CD8-positive, alpha-beta memory T cell (primary cell): ENCODE measurements at regions of chr4 and their contacts with region 1.

Region 1: DNA sequence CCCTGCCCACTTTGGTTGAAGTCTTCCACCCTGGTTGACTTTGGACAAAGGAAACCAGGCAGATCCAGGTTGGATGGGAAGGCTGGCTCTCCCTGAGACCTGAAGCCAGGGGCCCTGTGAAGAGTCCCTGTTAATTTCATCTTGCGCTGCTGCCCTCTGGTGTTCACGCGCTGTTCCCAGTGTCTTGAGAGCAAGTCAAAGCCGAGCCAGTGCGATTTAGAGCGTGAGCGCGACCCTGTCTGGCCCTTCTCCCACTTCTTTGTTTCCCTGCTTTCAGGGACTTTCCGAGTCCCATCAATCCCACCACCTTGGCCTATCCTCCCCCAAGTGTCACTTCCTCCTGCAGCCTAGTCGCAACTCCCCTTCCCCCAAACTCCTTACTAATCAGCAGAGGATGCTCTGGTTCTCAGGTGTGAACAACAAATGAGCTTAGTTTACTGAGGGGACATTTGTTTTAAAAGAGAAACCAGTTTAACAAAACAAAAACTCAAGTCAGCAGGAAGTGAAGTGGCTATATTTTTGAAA is 25.8 kb upstream of the CHRNA9 start:
- DNase-seq: peak; percentile 84 to 93 (median 87)
- H3K4me3 ChIP-seq: peak overlapping the region; percentile 46
- H3K4me3 Mint-ChIP-seq: peak overlapping the region; percentile 71 to 88 (median 81)
- H3K27ac ChIP-seq: peak overlapping the region; percentile 62
- H3K27ac Mint-ChIP-seq: peak overlapping the region; percentile 94 to 99 (median 98)
- H3K4me1 ChIP-seq: peaks cover 79% of the 10 kb centered on the region
- H3K4me1 Mint-ChIP-seq: peaks cover 57 to 85% (median 64%) of the 10 kb centered on the region in 3 donors
- H3K27me3 ChIP-seq: no peaks in the 10 kb centered on the region
- H3K27me3 Mint-ChIP-seq: peaks cover 0 to 2% of the 10 kb centered on the region in 2 donors

Region 2: GRCh38 chr4:40149960-40150385 is 159.3 kb before region 1 on chr4:
- CTCF ChIA-PET with region 1: interaction called, 39 read pairs
- POLR2A ChIA-PET with region 1: interaction called, 4 read pairs
- DNase-seq: peak; percentile 51 to 79 (median 70)
- H3K4me3 ChIP-seq: no peak overlapping the region
- H3K4me3 Mint-ChIP-seq: no peak overlapping the region
- H3K27ac ChIP-seq: no peak overlapping the region
- H3K27ac Mint-ChIP-seq: peak overlapping the region; percentile 33 to 90 (median 60)
- H3K4me1 ChIP-seq: peaks cover 20% of the 10 kb centered on the region
- H3K4me1 Mint-ChIP-seq: peaks cover 22 to 37% (median 34%) of the 10 kb centered on the region in 3 donors
- H3K27me3 ChIP-seq: no peaks in the 10 kb centered on the region
- H3K27me3 Mint-ChIP-seq: no peaks in the 10 kb centered on the region

Region 3: DNA sequence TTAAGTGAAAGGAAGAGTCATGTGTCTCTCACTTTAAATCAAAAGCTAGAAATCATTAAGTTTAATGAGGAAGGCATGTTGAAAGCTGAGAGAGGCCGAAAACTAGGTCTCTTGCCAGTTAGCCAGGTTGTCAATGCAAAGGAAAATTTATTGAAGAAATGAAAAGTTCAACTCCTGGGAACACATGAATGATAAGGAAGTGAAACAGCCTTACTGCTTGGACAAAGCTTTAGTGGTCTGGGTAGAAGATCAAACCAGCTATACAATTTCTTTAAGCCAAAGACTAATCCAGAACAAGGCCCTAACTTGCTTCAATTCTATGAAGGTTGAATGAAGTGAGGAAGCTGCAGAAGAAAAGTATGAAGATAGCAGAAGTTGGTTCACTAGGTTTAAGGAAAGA is 87.6 kb before region 1 on chr4:
- CTCF ChIA-PET with region 1: interaction called, 120 read pairs
- POLR2A ChIA-PET with region 1: interaction called, 5 read pairs
- DNase-seq: no peak
- H3K4me3 ChIP-seq: no peak overlapping the region
- H3K4me3 Mint-ChIP-seq: peak overlapping the region; percentile 52 to 85 (median 80)
- H3K27ac ChIP-seq: no peak overlapping the region
- H3K27ac Mint-ChIP-seq: peak overlapping the region; percentile 74 to 98 (median 89)
- H3K4me1 ChIP-seq: peaks cover 93% of the 10 kb centered on the region
- H3K4me1 Mint-ChIP-seq: peaks cover 88 to 95% (median 95%) of the 10 kb centered on the region in 3 donors
- H3K27me3 ChIP-seq: no peaks in the 10 kb centered on the region
- H3K27me3 Mint-ChIP-seq: no peaks in the 10 kb centered on the region

Region 4: GRCh38 chr4:40247350-40247749 is 62.0 kb before region 1 on chr4:
- CTCF ChIA-PET with region 1: interaction called, 21 read pairs
- POLR2A ChIA-PET with region 1: interaction called, 4 read pairs
- DNase-seq: peak in 4 of 5 donors; percentile 41 to 87 (median 56)
- H3K4me3 ChIP-seq: no peak overlapping the region
- H3K4me3 Mint-ChIP-seq: peak overlapping the region; percentile 3 to 82 (median 67)
- H3K27ac ChIP-seq: no peak overlapping the region
- H3K27ac Mint-ChIP-seq: peak overlapping the region; percentile 40 to 97 (median 96)
- H3K4me1 ChIP-seq: peaks cover 81% of the 10 kb centered on the region
- H3K4me1 Mint-ChIP-seq: peaks cover 65 to 91% (median 80%) of the 10 kb centered on the region in 3 donors
- H3K27me3 ChIP-seq: no peaks in the 10 kb centered on the region
- H3K27me3 Mint-ChIP-seq: no peaks in the 10 kb centered on the region

Region 5: DNA sequence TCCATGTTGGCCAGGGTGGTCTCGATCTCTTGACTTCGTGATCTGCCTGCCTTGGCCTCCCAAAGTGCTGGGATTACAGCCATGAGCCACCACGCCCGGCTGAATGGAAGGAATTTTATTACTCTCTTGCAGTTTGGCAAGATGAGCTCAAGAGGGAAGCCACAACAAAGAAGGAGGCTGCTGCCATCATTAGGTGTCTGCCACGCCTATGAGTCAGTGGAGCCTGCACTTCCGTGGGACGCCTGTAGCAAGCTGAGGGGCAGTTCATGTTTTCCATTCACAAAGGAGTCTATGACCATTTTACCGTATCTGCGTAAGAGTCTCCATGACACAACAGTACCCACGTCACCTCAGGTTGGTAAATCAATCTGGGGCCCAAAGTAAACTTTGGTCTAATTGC is 25.3 kb before region 1 on chr4:
- CTCF ChIA-PET with region 1: interaction called, 111 read pairs
- POLR2A ChIA-PET with region 1: interaction called, 15 read pairs
- DNase-seq: peak; percentile 58 to 93 (median 78)
- H3K4me3 ChIP-seq: no peak overlapping the region
- H3K4me3 Mint-ChIP-seq: peak overlapping the region in 6 of 7 donors; percentile 64 to 89 (median 72)
- H3K27ac ChIP-seq: no peak overlapping the region
- H3K27ac Mint-ChIP-seq: peak overlapping the region; percentile 88 to 98 (median 94)
- H3K4me1 ChIP-seq: peaks cover 55% of the 10 kb centered on the region
- H3K4me1 Mint-ChIP-seq: peaks cover 48 to 77% (median 58%) of the 10 kb centered on the region in 3 donors
- H3K27me3 ChIP-seq: no peaks in the 10 kb centered on the region
- H3K27me3 Mint-ChIP-seq: no peaks in the 10 kb centered on the region

Region 6: DNA sequence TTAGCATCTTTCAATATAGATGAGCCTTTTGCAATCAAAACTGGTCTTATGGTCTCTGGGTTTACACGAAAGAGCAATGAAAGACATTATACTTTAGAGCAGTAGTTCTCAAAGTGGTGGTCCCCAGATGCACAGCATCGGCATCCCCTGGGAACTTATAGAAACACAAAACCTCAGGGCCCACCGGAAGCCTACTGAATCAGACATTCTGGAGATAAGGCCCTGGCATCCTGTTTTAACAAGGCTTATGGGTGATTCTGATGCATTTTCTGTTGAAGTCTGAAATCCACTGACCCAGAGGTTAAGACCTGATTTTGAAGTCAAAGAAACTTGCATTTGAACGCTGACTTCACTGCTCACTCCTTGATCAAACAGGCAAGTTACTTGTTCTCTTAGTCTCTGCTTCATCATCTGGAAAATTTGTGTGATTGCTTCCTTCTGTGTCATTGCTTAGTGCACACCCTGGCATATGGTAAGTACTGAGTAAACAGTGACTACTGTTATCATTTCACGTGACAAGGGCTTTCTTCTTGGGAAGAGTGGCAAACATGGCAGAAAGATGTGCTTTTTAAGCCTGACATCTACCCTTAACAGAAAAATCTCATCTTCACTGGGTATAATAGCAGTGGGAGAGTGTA is 40.4 kb after region 1 on chr4:
- CTCF ChIA-PET with region 1: no interaction called
- POLR2A ChIA-PET with region 1: no interaction called
- DNase-seq: no peak
- H3K4me3 ChIP-seq: no peak overlapping the region
- H3K4me3 Mint-ChIP-seq: no peak overlapping the region
- H3K27ac ChIP-seq: no peak overlapping the region
- H3K27ac Mint-ChIP-seq: no peak overlapping the region
- H3K4me1 ChIP-seq: peaks cover 4% of the 10 kb centered on the region
- H3K4me1 Mint-ChIP-seq: no peaks in the 10 kb centered on the region
- H3K27me3 ChIP-seq: no peaks in the 10 kb centered on the region
- H3K27me3 Mint-ChIP-seq: peaks cover 2 to 9% of the 10 kb centered on the region in 2 donors